H1 (cell line): ENCODE measurements at regions of chr14 and their contacts with region 1.

Region 1: GRCh38 chr14:52840916-52841315 is 49.5 kb upstream of the GNPNAT1 start:
- DNase-seq: no peak
- H3K4me3 ChIP-seq: no peak overlapping the region
- H3K27ac ChIP-seq: no peak overlapping the region
- H3K4me1 ChIP-seq: peaks cover 0 to 7% (median 3%) of the 10 kb centered on the region in 4 experiments; a peak in 4 of 7 replicates
- H3K27me3 ChIP-seq: no peaks in the 10 kb centered on the region
- CTCF ChIP-seq: no peak
- EP300 ChIP-seq: no peak
- POLR2A ChIP-seq: no peak
- RAD21 ChIP-seq: no peak

Region 2: DNA sequence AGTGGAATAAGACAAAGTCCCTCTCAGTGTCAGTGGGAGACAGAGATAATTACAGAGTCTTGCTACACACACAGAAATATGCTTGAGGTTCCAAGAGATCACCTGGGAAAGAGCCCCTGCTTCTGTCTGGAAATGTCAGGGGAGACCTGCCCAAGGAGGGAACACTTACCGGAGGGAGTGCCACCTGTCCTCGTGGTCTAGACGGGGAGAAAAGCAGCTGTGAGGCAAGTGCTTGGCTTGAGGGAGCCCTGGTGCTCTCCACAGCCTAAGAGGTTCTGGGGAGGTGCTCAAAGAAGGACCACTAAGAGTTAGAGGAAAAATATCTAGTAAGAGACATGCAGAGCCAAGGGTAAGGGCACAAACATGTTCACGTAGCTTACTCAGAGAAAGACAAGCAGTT is 11.4 kb before region 1 on chr14:
- CTCF ChIA-PET with region 1: interaction called, 20 read pairs
- POLR2A ChIA-PET with region 1: no interaction called
- DNase-seq: no peak
- H3K4me3 ChIP-seq: no peak overlapping the region
- H3K27ac ChIP-seq: no peak overlapping the region
- H3K4me1 ChIP-seq: peaks cover 0 to 8% (median 2%) of the 10 kb centered on the region in 4 experiments; a peak in 5 of 7 replicates
- H3K27me3 ChIP-seq: no peaks in the 10 kb centered on the region
- CTCF ChIP-seq: no peak
- EP300 ChIP-seq: no peak
- POLR2A ChIP-seq: no peak
- RAD21 ChIP-seq: no peak

Region 3: DNA sequence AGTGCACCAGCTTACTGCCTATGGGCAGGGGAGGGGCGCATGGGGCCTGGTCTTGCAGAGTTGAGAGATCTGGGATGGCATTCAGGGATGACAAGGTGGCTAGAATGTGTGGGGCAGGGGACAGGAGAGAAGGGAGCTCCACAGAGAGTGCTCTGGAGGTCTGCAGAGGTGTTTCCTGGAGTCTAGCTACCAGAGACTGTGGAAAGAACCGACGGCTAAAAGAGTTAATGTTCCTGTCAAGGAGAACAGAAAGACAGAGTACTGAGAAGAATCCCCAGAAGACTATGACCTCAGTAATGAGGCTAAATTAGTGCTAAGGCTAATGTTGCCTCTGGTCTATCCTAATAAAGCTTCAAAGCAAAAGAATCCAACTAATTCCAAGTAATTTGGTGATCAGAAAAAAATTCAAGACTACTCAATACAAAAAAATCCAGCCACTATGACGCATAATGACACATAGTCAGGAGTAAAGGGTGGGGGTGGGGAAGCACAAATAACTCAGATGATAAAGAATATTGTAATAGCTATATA is 65.2 kb after region 1 on chr14:
- CTCF ChIA-PET with region 1: no interaction called
- POLR2A ChIA-PET with region 1: no interaction called
- DNase-seq: no peak
- H3K4me3 ChIP-seq: no peak overlapping the region
- H3K27ac ChIP-seq: no peak overlapping the region
- H3K4me1 ChIP-seq: peaks cover 0 to 4% (median 2%) of the 10 kb centered on the region in 4 experiments; a peak in 3 of 7 replicates
- H3K27me3 ChIP-seq: no peaks in the 10 kb centered on the region
- CTCF ChIP-seq: no peak
- EP300 ChIP-seq: no peak
- POLR2A ChIP-seq: no peak
- RAD21 ChIP-seq: no peak